ENCODE measurements at regions of chr11 and their contacts with region 1.

Region 1: GRCh38 chr11:83827940-83828554 is 541.9 kb upstream of the CCDC90B start:
- DNase-seq: no peak
- ATAC-seq: peak in 1 of 4 donors; percentile 51
- H3K4me3 ChIP-seq: peak overlapping the region; percentile 43
- H3K27ac ChIP-seq: no peak overlapping the region
- H3K4me1 ChIP-seq: no peaks in the 10 kb centered on the region
- H3K27me3 ChIP-seq: no peaks in the 10 kb centered on the region
- CTCF ChIP-seq: peak; percentile 41

Region 2: DNA sequence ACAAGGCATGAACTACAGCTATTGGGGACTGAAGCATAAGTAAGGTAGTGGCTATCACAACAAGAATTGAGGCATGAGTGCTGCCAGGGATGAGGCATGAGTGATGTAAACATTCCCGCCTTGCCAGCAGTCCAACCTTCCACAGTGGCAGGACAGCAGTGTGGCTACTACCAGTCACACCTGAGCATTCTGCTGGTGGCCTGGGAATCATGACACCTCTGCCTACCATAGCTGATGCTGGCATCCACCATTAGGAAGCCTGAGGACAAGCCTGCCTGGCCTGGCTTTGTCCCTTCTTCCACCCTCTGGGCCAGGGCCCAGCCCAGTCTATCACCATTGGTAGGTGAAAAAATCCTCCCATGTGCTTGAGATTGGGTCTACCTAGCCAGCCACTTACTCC is 170.9 kb after region 1 on chr11:
- intact Hi-C with region 1: no loop called
- DNase-seq: no peak
- ATAC-seq: no peak
- H3K4me3 ChIP-seq: no peak overlapping the region
- H3K27ac ChIP-seq: no peak overlapping the region
- H3K4me1 ChIP-seq: no peaks in the 10 kb centered on the region
- H3K27me3 ChIP-seq: no peaks in the 10 kb centered on the region
- CTCF ChIP-seq: no peak

Region 3: DNA sequence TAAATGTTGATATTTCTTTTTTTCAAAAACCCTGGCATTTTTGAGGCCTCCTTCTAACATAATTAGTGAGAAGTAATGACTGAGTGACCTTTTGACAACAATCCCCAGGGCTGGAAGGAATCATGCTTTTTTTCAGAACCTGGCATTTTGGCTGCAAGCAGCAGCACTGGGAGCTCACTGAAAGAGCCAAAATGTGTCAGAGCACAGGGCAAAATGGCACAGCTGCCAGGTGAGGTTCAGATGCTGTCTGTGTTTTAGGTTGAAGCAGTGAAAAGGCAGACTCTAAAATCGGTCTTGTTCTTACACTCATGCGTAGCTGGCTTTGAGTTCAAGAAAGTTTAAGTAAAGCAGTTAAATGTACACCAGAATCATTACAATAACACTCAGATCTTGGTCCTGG is 735.3 kb after region 1 on chr11:
- intact Hi-C with region 1: loop called in 1 of 2 experiments (anchors 2 kb)
- DNase-seq: no peak
- ATAC-seq: no peak
- H3K4me3 ChIP-seq: no peak overlapping the region
- H3K27ac ChIP-seq: no peak overlapping the region
- H3K4me1 ChIP-seq: no peaks in the 10 kb centered on the region
- H3K27me3 ChIP-seq: no peaks in the 10 kb centered on the region
- CTCF ChIP-seq: no peak

Measured in psoas muscle (tissue), 8 donors.